ENCODE measurements at regions of chr1 and their contacts with region 1.

Region 1: DNA sequence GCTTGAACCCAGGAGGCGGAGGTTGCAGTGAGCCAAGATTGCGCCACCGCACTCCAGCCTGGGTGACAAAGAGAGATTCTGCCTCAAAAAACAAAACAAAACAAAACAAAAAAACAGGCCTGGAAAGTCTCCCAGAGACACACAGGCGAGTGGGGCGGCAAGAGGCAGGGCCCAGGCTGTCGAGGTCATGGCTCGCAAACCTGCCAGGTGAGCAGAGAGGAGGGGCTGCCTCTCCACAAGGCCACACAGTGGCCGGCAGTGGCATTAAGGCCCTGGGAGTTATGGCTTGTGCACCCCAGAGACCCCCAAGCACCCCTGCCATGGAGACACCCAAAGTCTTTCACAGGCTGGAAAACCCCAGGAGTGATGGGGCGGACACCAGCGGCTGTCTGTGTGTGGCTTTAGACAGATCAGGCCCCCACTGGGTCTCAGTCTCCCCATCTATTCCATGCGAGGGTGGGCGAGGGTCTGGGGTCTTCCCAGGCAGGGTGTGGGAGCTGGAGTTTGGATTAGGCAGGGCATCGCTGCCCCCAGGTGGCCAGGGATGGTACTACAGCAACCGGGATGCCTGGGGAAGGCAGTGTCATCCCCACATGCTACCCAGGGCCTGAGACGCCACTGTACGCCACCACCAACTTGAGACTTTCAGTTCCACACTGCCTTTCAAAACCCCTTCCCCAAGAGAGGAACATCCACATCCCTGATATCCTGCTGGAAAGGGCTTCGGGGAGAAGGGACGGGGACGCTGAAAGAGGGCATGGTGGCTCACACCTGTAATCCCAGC is 7.3 kb upstream of the CTRC start:
- DNase-seq: peak; percentile 59
- ATAC-seq: peak; percentile 30
- H3K4me3 ChIP-seq: no peak overlapping the region
- H3K27ac ChIP-seq: 0 out of 2 replicates have a peak overlapping the region, but pooled peaks have one; percentile 9
- H3K4me1 ChIP-seq: peaks cover 32% of the 10 kb centered on the region
- H3K27me3 ChIP-seq: no peaks in the 10 kb centered on the region
- CTCF ChIP-seq: peak; percentile 95

Region 2: GRCh38 chr1:14894811-14895560 is 536.0 kb before region 1 on chr1:
- CTCF ChIA-PET with region 1: no interaction called
- POLR2A ChIA-PET with region 1: no interaction called
- intact Hi-C with region 1: no loop called
- DNase-seq: peak; percentile 67
- ATAC-seq: peak; percentile 42; the same call in 1 of the 2 replicates
- H3K4me3 ChIP-seq: no peak overlapping the region
- H3K27ac ChIP-seq: no peak overlapping the region
- H3K4me1 ChIP-seq: peaks cover 11% of the 10 kb centered on the region
- H3K27me3 ChIP-seq: 0 out of 2 replicates have a peak, but pooled peaks cover under 1% of the 10 kb centered on the region
- CTCF ChIP-seq: no peak

Region 3: DNA sequence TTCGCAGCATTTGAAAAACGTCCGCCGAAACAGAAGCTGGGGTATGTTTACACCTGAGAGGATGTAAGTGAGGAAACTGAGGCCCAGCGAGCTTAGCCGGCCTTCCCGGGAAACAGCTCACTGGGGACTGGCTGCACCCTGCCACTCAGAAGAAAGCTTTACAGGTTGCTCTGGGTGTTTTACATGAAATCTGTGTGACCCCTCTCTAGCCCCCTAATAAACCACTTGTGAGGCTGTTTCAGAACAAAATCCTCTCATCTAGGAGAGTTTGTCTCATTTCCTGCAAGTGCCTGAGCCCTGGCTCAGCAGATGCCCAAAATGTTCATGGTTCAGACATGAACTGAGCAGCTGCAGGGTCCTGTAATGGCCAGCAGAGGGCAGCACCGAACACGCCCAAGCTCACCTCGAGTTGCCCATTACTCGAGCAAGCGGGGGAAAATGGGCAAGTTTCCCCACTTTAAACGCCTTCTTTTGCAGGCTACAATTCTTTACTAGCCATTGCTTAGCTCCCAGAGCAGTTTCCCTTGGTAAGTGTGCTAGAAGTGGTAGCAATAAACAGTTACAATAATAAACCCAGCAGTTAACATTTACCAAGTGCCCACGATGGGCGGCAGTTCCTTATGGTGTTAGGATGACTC is 107.5 kb before region 1 on chr1:
- CTCF ChIA-PET with region 1: interaction called, 12 read pairs
- POLR2A ChIA-PET with region 1: no interaction called
- intact Hi-C with region 1: loop called (anchors 1 kb)
- DNase-seq: peak; percentile 85
- ATAC-seq: peak; percentile 92
- H3K4me3 ChIP-seq: peak overlapping the region; percentile 20; the same call in 1 of the 2 replicates
- H3K27ac ChIP-seq: peak overlapping the region; percentile 39; the same call in 1 of the 2 replicates
- H3K4me1 ChIP-seq: peaks cover 13% of the 10 kb centered on the region
- H3K27me3 ChIP-seq: no peaks in the 10 kb centered on the region
- CTCF ChIP-seq: peak; percentile 98

Region 4: GRCh38 chr1:15409388-15410222 is 21.4 kb before region 1 on chr1 and contains the start of gene EFHD2:
- CTCF ChIA-PET with region 1: no interaction called
- POLR2A ChIA-PET with region 1: no interaction called
- intact Hi-C with region 1: loop called (anchors 1 kb)
- DNase-seq: peak; percentile 80
- ATAC-seq: peak; percentile 84
- H3K4me3 ChIP-seq: peak within 1 kb of the TSS; percentile 100
- H3K27ac ChIP-seq: peak within 1 kb of the TSS; percentile 50
- H3K4me1 ChIP-seq: peaks cover 46% of the 10 kb centered on the region
- H3K27me3 ChIP-seq: no peaks in the 10 kb centered on the region
- CTCF ChIP-seq: no peak
- total RNA-seq, gene EFHD2: 192 and 271 TPM in 2 replicates

Region 5: DNA sequence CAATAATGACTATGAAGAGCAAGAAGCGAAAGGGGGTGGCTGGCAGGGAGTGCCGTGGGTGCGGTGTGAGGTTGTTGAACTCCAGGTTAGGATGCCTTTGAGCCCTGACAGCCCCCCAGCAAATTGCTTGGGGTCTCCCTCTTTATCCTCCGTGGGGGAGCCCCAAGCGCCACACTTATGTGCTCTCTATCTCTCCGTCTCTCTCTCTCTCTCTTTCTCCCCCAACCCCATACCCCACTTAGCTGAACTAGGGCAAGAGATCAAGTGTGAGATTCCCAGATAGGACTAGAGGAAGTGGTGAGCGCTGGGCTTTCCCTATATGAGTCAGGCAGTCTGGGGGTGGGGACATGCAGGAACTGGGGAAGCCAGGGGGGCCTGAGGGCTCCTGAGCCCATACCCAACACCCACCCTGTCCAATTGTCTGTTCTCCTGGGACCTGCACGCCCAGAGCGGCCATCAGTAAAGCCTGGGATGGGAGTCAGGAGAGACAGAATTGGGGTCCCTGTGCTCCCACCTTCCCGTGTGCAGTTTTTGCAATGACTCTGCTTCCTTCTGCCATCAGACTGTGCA is 13.5 kb before region 1 on chr1:
- CTCF ChIA-PET with region 1: no interaction called
- POLR2A ChIA-PET with region 1: no interaction called
- intact Hi-C with region 1: loop called (anchors 2 kb)
- DNase-seq: peak; percentile 85
- ATAC-seq: peak; percentile 71
- H3K4me3 ChIP-seq: peak overlapping the region; percentile 54
- H3K27ac ChIP-seq: peak overlapping the region; percentile 98
- H3K4me1 ChIP-seq: peaks cover 51% of the 10 kb centered on the region
- H3K27me3 ChIP-seq: no peaks in the 10 kb centered on the region
- CTCF ChIP-seq: no peak

Measured in PC-3 (cell line).